Activated CD4-positive, alpha-beta memory T cell treated with anti-CD3 and anti-CD28 coated beads for 36 hours (primary cell): ENCODE measurements at regions of chr1 and their contacts with region 1.

Region 1: GRCh38 chr1:184973272-184974055 is 844 bp downstream of the NIBAN1 start:
- DNase-seq: peak; percentile 86
- H3K4me3 Mint-ChIP-seq: peak overlapping the region; percentile 94
- H3K27ac Mint-ChIP-seq: peak overlapping the region; percentile 96
- H3K4me1 Mint-ChIP-seq: peaks cover 53% of the 10 kb centered on the region
- H3K27me3 Mint-ChIP-seq: peaks cover 6% of the 10 kb centered on the region

Region 2: GRCh38 chr1:184881941-184882913 is 91.2 kb before region 1 on chr1:
- CTCF ChIA-PET with region 1: interaction called, 5 read pairs
- POLR2A ChIA-PET with region 1: interaction called, 28 read pairs
- intact Hi-C with region 1: loop called (anchors 1 kb)
- DNase-seq: peak; percentile 48
- H3K4me3 Mint-ChIP-seq: peak overlapping the region; percentile 13
- H3K27ac Mint-ChIP-seq: peak overlapping the region; percentile 92
- H3K4me1 Mint-ChIP-seq: peaks cover 33% of the 10 kb centered on the region
- H3K27me3 Mint-ChIP-seq: peaks cover 2% of the 10 kb centered on the region

Region 3: DNA sequence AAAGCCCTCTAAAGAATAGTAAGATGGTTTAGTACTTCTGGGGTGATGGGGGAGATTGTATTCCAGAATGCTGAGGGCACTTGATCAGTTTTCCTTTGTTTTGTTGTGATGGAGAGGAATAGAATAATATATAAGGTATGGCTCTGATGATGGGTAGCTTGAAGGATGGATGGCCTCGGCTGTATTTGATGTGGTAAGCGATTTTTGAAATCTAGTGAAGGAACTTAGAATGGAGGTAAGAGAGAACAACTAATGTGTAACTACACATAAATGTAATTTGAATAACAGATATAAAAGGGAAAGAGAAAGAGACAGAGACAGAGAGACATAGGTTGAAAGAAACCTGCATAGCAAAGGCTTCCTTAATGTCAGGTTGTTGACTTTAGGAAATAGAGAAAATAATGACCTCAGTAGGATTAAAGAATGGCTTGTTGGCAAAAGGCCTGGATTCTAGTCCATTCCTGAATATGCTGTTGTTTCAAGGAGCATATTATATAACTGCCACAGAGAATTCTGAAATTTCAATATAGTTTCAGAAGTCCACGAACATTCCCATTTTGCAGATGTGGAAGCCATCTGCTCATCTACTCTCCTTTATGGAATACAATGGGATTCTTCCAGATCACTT is 57.9 kb before region 1 on chr1:
- CTCF ChIA-PET with region 1: no interaction called
- POLR2A ChIA-PET with region 1: no interaction called
- intact Hi-C with region 1: no loop called
- DNase-seq: no peak
- H3K4me3 Mint-ChIP-seq: no peak overlapping the region
- H3K27ac Mint-ChIP-seq: no peak overlapping the region
- H3K4me1 Mint-ChIP-seq: peaks cover 18% of the 10 kb centered on the region
- H3K27me3 Mint-ChIP-seq: no peaks in the 10 kb centered on the region

Region 4: GRCh38 chr1:184994301-184994700 is 20.8 kb after region 1 on chr1:
- CTCF ChIA-PET with region 1: no interaction called
- POLR2A ChIA-PET with region 1: no interaction called
- intact Hi-C with region 1: no loop called
- DNase-seq: no peak
- H3K4me3 Mint-ChIP-seq: no peak overlapping the region
- H3K27ac Mint-ChIP-seq: no peak overlapping the region
- H3K4me1 Mint-ChIP-seq: no peaks in the 10 kb centered on the region
- H3K27me3 Mint-ChIP-seq: peaks cover 18% of the 10 kb centered on the region